Colonic mucosa (tissue), 4 donors: ENCODE measurements at regions of chr5 and their contacts with region 1.

Region 1: GRCh38 chr5:172188033-172188892 is at the start of gene STK10:
- DNase-seq: peak; percentile 90
- H3K4me3 ChIP-seq: peak within 1 kb of the TSS; percentile 97
- H3K27ac ChIP-seq: peak within 1 kb of the TSS; percentile 95
- H3K4me1 ChIP-seq: no peaks in the 10 kb centered on the region
- H3K27me3 ChIP-seq: no peaks in the 10 kb centered on the region
- CTCF ChIP-seq: peak; percentile 88
- total RNA-seq, gene STK10: 16.1 to 23.2 TPM

Region 2: DNA sequence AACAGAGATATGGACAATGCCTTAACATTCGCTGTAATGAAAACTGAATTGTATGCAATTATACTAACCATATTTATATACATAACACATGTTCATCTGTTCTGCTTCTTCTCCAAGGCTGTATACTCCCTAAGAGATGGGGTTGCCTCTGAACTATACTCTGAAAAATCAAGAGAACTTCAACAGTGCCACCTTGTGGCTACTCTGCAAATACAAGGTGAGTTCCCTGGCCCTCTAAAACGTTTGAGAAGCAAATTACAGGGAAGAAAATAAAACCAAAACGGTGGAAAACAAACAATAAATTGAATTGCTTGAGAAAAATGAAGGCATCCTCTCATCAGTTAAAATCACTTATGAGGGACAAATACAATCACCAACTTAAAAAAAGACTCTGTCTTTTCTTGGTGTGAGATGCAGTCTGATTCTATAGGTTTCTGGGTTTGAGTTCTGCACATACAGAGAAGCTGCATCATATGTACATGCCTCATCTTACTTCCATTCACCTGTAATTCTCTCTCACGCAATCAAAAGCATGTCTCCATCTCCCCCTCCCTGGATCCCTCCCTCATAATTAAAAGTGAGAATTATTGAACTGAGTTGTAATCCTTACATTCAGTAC is 280.4 kb before region 1 on chr5:
- intact Hi-C with region 1: no loop called
- DNase-seq: peak; percentile 47
- H3K4me3 ChIP-seq: no peak overlapping the region
- H3K27ac ChIP-seq: no peak overlapping the region
- H3K4me1 ChIP-seq: no peaks in the 10 kb centered on the region
- H3K27me3 ChIP-seq: no peaks in the 10 kb centered on the region
- CTCF ChIP-seq: peak; percentile 78

Region 3: GRCh38 chr5:172283020-172283861 is 95.0 kb after region 1 on chr5 and contains the start of gene UBTD2:
- intact Hi-C with region 1: loop called (anchors 5 kb)
- DNase-seq: peak; percentile 84
- H3K4me3 ChIP-seq: peak within 1 kb of the TSS; percentile 83
- H3K27ac ChIP-seq: peak within 1 kb of the TSS; percentile 80
- H3K4me1 ChIP-seq: peaks cover 11% of the 10 kb centered on the region
- H3K27me3 ChIP-seq: no peaks in the 10 kb centered on the region
- CTCF ChIP-seq: peak; percentile 41
- total RNA-seq, gene UBTD2: 15.4 to 24.3 TPM